Esophagus squamous epithelium (tissue), 5 donors: ENCODE measurements at regions of chr7 and their contacts with region 1.

Region 1: DNA sequence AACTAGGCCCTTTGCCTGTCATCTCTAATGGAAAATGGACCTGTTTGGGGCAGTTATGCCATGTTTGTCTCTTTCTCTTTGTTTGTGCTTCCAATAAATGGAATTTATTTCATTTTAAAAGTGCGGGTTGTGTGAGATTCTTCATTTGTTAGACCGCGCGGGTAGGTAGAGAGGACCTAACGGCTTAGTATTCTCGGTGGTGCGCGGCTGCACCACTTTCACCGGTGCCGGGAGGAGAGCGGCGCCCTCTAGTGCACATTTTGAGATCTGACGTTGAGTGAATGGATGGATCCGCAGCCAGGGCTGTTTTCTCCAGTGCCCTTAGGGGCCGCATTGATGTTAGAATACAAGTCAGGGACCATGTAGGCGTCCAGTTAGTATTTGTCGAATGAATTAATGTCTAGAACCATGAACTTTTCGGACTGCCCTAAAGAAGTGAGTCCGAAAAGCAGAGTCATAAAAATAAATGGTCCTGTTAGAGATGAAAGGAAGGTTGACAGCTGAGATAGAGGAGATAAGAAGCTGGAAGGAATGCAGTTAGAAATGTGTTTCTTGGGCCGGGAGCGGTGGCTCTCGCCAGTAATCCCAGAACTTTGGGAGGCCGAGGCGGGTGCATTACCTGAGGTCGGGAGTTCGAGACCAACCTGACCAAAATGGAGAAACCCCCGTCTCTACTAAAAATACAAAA is 29.3 kb upstream of the GIMAP8 start:
- DNase-seq: no peak
- H3K4me3 ChIP-seq: no peak overlapping the region
- H3K27ac ChIP-seq: no peak overlapping the region
- H3K4me1 ChIP-seq: peaks cover 0 to 8% (median 0%) of the 10 kb centered on the region in 3 donors
- H3K27me3 ChIP-seq: no peaks in the 10 kb centered on the region
- CTCF ChIP-seq: peak; percentile 58 to 87 (median 86)
- POLR2A ChIP-seq: no peak

Region 2: DNA sequence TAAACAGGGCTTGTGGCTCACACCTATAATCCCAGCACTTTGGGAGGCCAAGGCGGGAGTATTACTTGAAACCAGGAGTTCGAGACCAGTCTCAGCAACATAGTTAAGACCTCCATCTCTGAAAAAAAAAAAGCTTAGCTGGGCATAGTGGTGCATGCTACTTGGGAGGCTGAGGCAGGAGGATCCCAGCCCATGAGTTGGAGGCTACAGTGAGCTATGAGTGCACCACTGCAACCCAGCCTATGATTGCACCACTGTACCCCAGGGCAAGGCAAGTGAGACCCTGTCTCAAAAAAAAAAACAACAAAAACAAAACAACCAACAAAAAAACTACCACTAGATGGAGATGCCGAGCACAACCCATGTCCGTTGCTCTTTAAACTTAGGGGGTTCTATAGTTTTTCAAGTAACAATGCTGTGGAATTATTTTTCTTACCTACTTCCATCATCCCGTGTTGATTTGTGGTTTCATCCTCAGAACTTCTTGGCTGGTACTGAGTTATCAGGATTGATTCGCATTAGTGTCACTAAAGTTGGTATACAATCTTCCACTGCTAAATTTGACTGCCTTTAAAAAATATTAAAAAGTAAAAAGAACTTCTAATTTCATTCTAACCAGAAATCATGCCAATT is 64.8 kb before region 1 on chr7:
- intact Hi-C with region 1: loop called (anchors 5 kb)
- DNase-seq: no peak
- H3K4me3 ChIP-seq: no peak overlapping the region
- H3K27ac ChIP-seq: no peak overlapping the region
- H3K4me1 ChIP-seq: peaks cover 0 to 4% (median 0%) of the 10 kb centered on the region in 3 donors
- H3K27me3 ChIP-seq: no peaks in the 10 kb centered on the region
- CTCF ChIP-seq: peak; percentile 17 to 68 (median 35)
- POLR2A ChIP-seq: no peak